ENCODE measurements at regions of chr5 and their contacts with region 1.

Region 1: DNA sequence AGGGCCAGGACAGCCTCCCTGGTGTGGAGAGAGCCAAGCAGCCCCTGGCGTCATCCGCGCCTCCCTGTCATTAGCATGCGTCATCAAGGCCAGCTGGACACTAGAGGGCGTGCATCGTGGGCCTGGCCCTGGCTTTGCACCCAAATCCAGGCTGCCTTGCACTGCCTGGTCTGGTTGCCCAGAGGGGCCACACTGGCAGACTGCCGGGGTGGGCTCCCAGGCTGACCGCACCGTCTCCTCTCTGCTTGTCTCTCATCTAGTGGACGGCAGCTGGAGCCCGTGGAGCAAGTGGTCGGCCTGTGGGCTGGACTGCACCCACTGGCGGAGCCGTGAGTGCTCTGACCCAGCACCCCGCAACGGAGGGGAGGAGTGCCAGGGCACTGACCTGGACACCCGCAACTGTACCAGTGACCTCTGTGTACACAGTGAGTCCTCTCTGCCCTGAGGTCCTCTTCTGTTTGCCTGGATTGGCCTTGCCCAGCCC is 29.0 kb downstream of the HK3 start:
- DNase-seq: peak in 1 of 2 experiments; percentile 27
- H3K4me3 ChIP-seq: no peak overlapping the region
- H3K27ac ChIP-seq: no peak overlapping the region
- H3K4me1 ChIP-seq: no peaks in the 10 kb centered on the region
- H3K27me3 ChIP-seq: no peaks in the 10 kb centered on the region
- CTCF ChIP-seq: 0 out of 2 replicates have a peak, but pooled peaks have one; percentile 36

Region 2: GRCh38 chr5:176429972-176430371 is 440.2 kb before region 1 on chr5:
- CTCF ChIA-PET with region 1: no interaction called
- POLR2A ChIA-PET with region 1: interaction called, 19 read pairs
- intact Hi-C with region 1: no loop called
- DNase-seq: peak in 1 of 2 experiments; percentile 26
- H3K4me3 ChIP-seq: no peak overlapping the region
- H3K27ac ChIP-seq: no peak overlapping the region
- H3K4me1 ChIP-seq: peaks cover 35% of the 10 kb centered on the region
- H3K27me3 ChIP-seq: no peaks in the 10 kb centered on the region
- CTCF ChIP-seq: no peak

Region 3: DNA sequence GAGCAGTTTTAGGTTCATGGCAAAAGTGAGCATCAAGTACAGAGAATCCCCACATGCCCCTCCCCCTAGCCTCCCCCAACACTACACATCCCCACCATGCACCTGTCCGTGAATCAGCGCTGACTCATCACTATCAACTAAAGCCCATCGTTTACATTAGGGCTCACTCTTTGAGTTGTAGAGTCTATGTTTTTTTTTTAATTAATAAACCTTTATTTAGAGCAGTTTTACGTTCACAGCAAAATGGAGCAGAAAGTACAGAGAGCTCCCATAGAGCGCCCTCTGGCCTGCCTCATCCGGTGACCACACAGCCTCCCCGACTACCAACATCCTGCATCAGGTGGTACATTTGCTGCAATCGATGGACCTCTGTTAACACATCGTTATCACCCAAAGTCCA is 107.7 kb before region 1 on chr5:
- CTCF ChIA-PET with region 1: no interaction called
- POLR2A ChIA-PET with region 1: no interaction called
- intact Hi-C with region 1: no loop called
- DNase-seq: peak in 1 of 2 experiments; percentile 45
- H3K4me3 ChIP-seq: no peak overlapping the region
- H3K27ac ChIP-seq: no peak overlapping the region
- H3K4me1 ChIP-seq: peaks cover 9% of the 10 kb centered on the region; the same call in 1 of the 2 replicates
- H3K27me3 ChIP-seq: peaks cover 18% of the 10 kb centered on the region
- CTCF ChIP-seq: no peak

Region 4: DNA sequence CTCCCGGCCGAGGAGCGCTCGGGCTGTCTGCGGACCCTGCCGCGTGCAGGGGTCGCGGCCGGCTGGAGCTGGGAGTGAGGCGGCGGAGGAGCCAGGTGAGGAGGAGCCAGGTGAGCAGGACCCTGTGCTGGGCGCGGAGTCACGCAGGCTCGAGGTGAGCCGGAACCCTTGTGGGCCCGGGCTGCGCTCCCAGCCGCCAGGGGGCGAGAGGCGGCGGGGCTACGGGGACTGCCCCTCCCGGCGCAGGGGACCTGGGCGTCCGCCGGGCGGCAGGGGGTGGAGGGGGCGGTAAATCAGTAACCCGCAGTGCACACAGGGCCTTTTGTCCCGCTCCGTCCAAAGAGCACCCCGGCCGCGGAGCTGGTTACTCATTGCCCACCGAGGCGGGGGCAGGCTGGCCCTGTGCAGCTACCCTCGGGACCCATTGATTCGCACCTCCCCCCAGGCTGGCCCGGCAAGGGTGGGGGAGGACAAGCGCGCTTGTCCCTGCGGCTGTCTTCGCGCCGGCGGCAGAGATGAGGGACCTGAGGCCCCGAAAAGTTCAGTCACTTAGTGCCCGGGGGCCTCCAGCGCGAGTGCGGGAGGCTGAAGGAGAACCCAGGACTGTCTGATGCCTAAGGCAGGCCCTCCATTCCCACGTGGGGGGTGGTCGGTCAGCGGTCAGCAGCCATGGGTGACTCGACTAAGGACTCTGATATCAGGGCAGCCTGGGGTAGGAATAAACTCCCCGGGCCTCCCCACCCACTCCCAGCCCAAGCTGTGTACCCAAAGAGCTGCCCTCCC is 217.0 kb after region 1 on chr5:
- CTCF ChIA-PET with region 1: no interaction called
- POLR2A ChIA-PET with region 1: interaction called, 11 read pairs
- intact Hi-C with region 1: no loop called
- DNase-seq: peak in 1 of 2 experiments; percentile 77
- H3K4me3 ChIP-seq: peak overlapping the region; percentile 65
- H3K27ac ChIP-seq: no peak overlapping the region
- H3K4me1 ChIP-seq: no peaks in the 10 kb centered on the region
- H3K27me3 ChIP-seq: 0 out of 2 replicates have a peak, but pooled peaks cover 5% of the 10 kb centered on the region
- CTCF ChIP-seq: peak; percentile 62